ENCODE measurements at regions of chr3 and their contacts with region 1.

Region 1: DNA sequence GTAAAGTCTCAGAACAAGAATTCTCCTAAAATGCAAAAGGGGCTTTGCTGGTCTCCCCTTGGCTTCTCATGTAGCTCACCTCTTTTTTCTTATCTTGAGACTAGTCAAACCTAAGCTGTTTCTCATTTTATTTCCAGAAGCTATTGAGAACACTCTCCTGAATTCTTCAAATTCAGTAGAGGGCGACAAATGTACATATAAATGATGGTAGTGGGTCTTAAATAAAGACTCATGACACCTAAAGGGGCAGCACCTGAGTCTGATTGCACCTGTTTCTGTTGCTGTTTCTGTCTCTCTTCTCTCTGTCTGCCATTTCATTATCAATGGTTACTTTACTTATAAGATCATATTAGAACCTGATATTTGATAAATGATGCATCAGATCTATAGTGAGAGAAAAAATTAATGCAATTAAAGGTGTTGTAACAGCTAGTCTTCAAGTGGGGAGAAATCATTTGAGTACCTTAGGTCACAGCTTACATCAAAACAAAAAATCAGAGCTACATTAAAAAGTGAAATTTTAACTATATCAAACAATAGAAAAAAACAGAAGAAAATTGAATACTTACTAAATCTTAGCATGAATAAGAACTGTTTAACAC is 7.0 kb downstream of the ADIPOQ start:
- DNase-seq: no peak
- H3K4me3 ChIP-seq: no peak overlapping the region
- H3K27ac ChIP-seq: no peak overlapping the region
- H3K4me1 ChIP-seq: no peaks in the 10 kb centered on the region
- H3K27me3 ChIP-seq: no peaks in the 10 kb centered on the region
- CTCF ChIP-seq: peak in 2 of 3 experiments; percentile 49 to 71; a peak in 3 of 4 replicates
- EP300 ChIP-seq: no peak
- POLR2A ChIP-seq: no peak
- RAD21 ChIP-seq: peak; percentile 84

Region 2: DNA sequence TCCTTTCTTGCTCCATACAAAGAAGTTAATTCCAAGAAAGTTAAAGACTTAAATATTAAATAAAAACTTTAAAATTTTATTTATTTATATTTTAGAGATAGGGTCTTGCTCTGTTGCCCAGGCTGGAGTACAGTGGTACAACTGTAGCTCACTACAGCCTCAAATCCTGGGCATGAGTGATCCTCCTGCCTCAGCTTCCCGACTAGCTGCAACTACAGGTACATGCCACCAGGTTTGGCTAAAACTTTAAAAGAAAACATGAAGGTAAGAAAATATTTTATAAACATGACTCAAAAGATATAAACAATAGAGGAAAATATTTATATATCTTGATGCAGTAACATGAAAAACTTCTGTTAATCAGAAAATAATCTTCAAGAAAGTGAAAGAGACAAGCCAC is 26.2 kb after region 1 on chr3:
- CTCF ChIA-PET with region 1: no interaction called
- POLR2A ChIA-PET with region 1: no interaction called
- DNase-seq: no peak
- H3K4me3 ChIP-seq: no peak overlapping the region
- H3K27ac ChIP-seq: no peak overlapping the region
- H3K4me1 ChIP-seq: no peaks in the 10 kb centered on the region
- H3K27me3 ChIP-seq: no peaks in the 10 kb centered on the region
- CTCF ChIP-seq: no peak
- EP300 ChIP-seq: no peak
- POLR2A ChIP-seq: no peak
- RAD21 ChIP-seq: no peak

Region 3: GRCh38 chr3:186920301-186920700 is 70.8 kb after region 1 on chr3:
- CTCF ChIA-PET with region 1: interaction called, 11 read pairs
- POLR2A ChIA-PET with region 1: no interaction called
- DNase-seq: no peak
- H3K4me3 ChIP-seq: no peak overlapping the region
- H3K27ac ChIP-seq: no peak overlapping the region
- H3K4me1 ChIP-seq: no peaks in the 10 kb centered on the region
- H3K27me3 ChIP-seq: no peaks in the 10 kb centered on the region
- CTCF ChIP-seq: no peak
- EP300 ChIP-seq: no peak
- POLR2A ChIP-seq: no peak
- RAD21 ChIP-seq: no peak

Region 4: DNA sequence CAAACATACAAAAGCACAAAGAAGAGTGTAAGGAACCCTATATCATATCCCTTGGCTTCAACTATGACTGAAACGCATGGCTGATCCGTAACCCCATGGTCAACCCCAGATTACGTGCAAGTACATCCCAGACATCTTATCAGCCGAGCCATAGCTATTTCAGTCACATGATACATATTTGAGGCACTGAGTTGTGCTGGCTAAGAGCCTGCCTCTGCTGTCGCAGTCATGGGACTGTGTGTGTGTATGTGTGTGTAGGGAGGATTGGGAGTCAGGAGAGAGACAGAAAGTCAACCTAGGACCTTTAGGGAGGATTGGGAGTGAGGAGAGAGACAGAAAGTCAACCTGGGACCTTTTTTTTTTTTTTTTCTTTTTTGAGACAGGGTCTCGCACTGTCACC is 89.2 kb after region 1 on chr3:
- CTCF ChIA-PET with region 1: interaction called, 13 read pairs
- POLR2A ChIA-PET with region 1: interaction called, 3 read pairs
- DNase-seq: no peak
- H3K4me3 ChIP-seq: no peak overlapping the region
- H3K27ac ChIP-seq: no peak overlapping the region
- H3K4me1 ChIP-seq: peaks cover 2 to 13% (median 11%) of the 10 kb centered on the region in 4 experiments; a peak in 6 of 7 replicates
- H3K27me3 ChIP-seq: no peaks in the 10 kb centered on the region
- CTCF ChIP-seq: no peak
- EP300 ChIP-seq: no peak
- POLR2A ChIP-seq: no peak
- RAD21 ChIP-seq: no peak

Region 5: GRCh38 chr3:187019542-187020072 is 170.1 kb after region 1 on chr3:
- CTCF ChIA-PET with region 1: interaction called, 10 read pairs
- POLR2A ChIA-PET with region 1: no interaction called
- DNase-seq: no peak
- H3K4me3 ChIP-seq: no peak overlapping the region
- H3K27ac ChIP-seq: no peak overlapping the region
- H3K4me1 ChIP-seq: no peaks in the 10 kb centered on the region
- H3K27me3 ChIP-seq: no peaks in the 10 kb centered on the region
- CTCF ChIP-seq: peak; percentile 32 to 37 (median 35); a peak in 3 of 4 replicates
- EP300 ChIP-seq: no peak
- POLR2A ChIP-seq: no peak
- RAD21 ChIP-seq: peak; percentile 61 to 70

Region 6: DNA sequence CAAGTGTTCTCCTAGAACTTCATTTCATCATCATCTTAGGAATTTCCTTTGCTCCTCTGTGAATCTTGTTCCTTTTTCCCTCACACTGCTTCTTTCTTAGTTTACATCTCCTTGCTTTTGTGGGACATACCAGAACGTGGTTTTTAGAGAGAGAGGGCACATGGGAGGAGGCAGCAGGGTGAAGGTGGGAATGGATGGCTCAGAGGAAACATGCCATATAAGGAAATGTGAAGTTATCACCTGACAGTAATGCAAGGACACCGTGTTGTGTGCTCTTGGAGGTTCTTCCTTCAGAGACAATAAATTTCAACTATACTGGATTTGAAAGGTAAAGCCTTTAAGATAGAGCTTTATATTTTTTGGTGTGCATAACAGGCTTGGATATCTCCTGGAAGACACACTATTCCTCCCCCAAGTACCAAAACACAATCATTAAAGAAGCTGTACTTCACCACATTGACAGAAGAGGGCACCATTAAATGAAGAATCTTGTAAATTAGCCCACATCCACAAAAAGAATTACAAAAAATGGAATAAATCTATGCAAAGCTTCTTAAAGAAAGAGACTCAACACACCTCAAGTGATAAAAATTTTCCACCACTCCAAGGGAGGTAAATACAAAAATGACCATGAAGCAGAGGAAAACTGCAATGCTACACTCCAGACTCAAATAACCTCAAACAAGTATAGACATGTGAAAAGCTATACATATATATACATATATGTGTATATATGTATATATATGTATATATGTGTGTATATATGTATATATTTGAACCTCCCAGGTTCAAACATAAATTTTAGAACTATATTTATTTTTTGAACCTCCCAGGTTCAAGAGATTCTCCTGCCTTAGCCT is 263.7 kb after region 1 on chr3:
- CTCF ChIA-PET with region 1: interaction called, 23 read pairs
- POLR2A ChIA-PET with region 1: no interaction called
- DNase-seq: no peak
- H3K4me3 ChIP-seq: no peak overlapping the region
- H3K27ac ChIP-seq: no peak overlapping the region
- H3K4me1 ChIP-seq: no peaks in the 10 kb centered on the region
- H3K27me3 ChIP-seq: no peaks in the 10 kb centered on the region
- CTCF ChIP-seq: peak in 2 of 3 experiments; percentile 38 to 42; a peak in 2 of 4 replicates
- EP300 ChIP-seq: no peak
- POLR2A ChIP-seq: no peak
- RAD21 ChIP-seq: peak; percentile 47 to 57

Region 7: DNA sequence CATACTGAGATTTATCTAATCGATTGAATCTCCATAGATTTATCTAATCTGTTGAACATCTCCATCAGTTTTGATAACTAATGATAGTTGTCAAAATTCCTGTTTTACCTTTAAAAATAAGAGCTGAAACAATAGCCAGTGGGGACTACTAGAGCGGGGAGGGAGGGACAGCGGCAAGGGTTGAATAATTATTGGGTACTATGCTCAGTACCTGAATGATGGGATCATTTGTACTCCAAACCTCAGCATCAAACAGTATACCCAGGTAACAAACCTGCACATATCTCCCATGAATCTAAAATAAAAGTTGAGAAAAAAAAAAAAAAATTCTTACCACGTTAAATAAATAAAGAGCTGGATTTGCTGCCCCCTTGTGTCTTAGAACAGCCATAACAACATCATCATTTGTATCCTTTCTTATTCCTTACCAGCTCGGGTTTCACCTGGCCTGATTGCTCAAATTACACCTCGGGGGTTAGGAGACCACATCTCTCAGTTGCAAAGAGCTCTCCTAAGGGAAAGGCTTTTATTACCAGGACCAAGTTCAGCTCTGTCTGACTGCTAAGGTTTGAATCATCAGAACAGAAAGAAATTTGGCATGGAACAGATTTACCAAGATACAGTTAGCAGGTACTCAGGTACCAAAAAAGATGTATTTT is 315.5 kb after region 1 on chr3:
- CTCF ChIA-PET with region 1: interaction called, 32 read pairs
- POLR2A ChIA-PET with region 1: no interaction called
- DNase-seq: peak in 1 of 2 experiments; percentile 56
- H3K4me3 ChIP-seq: peak overlapping the region in 1 of 4 experiments; percentile 6; a peak in 1 of 8 replicates
- H3K27ac ChIP-seq: no peak overlapping the region
- H3K4me1 ChIP-seq: peaks cover 3 to 13% (median 7%) of the 10 kb centered on the region in 4 experiments; a peak in 6 of 7 replicates
- H3K27me3 ChIP-seq: no peaks in the 10 kb centered on the region
- CTCF ChIP-seq: peak in 2 of 3 experiments; percentile 46 to 64; a peak in 2 of 4 replicates
- EP300 ChIP-seq: no peak
- POLR2A ChIP-seq: no peak
- RAD21 ChIP-seq: peak; percentile 46 to 49

Measured in H1 (cell line).